Natural killer cell (primary cell): ENCODE measurements at regions of chr4 and their contacts with region 1.

Region 1: GRCh38 chr4:54840992-54841768 is 183.4 kb downstream of the KIT start:
- DNase-seq: peak in 1 of 2 donors; percentile 4
- ATAC-seq: peak in 1 of 3 donors; percentile 32
- H3K4me3 ChIP-seq: no peak overlapping the region
- H3K4me3 Mint-ChIP-seq: no peak overlapping the region
- H3K27ac ChIP-seq: no peak overlapping the region
- H3K27ac Mint-ChIP-seq: no peak overlapping the region
- H3K4me1 ChIP-seq: peaks cover 18% of the 10 kb centered on the region
- H3K4me1 Mint-ChIP-seq: peaks cover 10 to 13% of the 10 kb centered on the region in 2 donors
- H3K27me3 ChIP-seq: no peaks in the 10 kb centered on the region
- H3K27me3 Mint-ChIP-seq: no peaks in the 10 kb centered on the region
- CTCF ChIP-seq: no peak

Region 2: DNA sequence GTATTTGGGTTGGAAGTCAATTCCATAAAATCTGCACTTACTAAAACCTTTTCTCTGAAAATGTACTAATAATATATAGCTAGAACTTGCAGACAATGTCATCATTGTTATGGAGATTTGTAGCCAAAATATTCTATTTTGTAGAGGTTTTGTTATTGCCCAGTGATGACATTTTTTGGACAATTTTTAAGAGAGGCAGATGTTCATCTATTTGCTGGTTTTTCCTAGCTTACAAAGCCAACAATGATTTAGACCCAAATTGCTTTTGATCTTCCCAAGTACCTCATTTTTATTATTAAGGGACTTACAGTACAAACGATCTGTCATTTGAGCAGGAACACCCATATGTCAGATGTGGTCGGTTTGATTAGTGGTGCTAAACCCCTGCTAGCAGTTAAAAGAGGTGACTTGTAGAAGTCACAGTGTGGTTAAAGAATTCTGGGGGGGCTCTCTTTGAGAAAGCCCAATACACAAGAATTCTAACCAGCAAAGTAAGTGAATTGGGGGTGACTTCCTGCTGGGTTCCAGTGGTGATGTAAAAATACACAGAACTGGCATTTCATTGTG is 47.2 kb before region 1 on chr4:
- intact Hi-C with region 1: loop called (anchors 10 kb)
- DNase-seq: peak in 1 of 2 donors; percentile 7
- ATAC-seq: peak; percentile 59 to 87 (median 70)
- H3K4me3 ChIP-seq: no peak overlapping the region
- H3K4me3 Mint-ChIP-seq: peak overlapping the region; percentile 36
- H3K27ac ChIP-seq: no peak overlapping the region
- H3K27ac Mint-ChIP-seq: peak overlapping the region; percentile 28 to 48
- H3K4me1 ChIP-seq: peaks cover 22% of the 10 kb centered on the region
- H3K4me1 Mint-ChIP-seq: peaks cover 49 to 54% of the 10 kb centered on the region in 2 donors
- H3K27me3 ChIP-seq: no peaks in the 10 kb centered on the region
- H3K27me3 Mint-ChIP-seq: no peaks in the 10 kb centered on the region
- CTCF ChIP-seq: no peak